PC-9 (cell line): ENCODE measurements at regions of chr16 and their contacts with region 1.

Region 1: DNA sequence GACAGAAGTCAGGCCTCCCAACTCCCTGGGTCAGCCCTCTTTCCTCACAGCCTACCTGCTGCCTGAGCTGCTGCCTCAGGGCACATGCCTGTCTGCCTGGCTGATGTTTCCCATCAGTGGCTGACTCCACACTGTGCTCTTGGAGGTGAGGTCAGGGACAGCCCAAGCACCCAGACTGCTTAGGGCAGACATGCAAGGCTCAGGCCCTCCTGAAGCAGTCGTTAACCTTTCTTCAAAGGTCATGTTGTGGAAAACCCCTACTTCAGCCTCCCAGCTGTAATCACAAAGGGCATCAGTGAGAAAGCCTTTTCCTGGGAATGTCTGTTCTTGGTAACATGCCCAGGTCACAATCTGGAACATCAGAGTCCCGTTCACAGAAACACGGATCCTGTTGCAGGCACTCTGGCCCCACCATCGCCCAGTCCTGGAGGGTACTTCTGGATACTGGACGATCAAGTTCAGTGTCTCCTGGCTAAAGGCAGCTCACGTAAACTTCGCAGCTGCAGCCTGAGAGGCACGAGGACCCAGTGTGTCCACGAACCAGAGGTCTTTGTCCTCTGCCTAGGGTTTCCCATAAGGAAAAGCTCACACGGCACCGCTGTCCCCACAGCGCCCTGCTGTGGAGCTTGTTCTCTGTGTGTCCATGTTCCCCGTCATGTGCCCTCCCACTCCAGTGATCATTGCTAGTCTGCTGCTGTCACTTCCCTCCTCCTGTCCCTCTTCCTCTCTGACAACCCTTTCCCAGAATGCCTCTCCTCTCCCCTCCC is 54.9 kb downstream of the GNAO1 start:
- DNase-seq: peak; percentile 91 to 97
- H3K4me3 ChIP-seq: no peak overlapping the region
- H3K27ac ChIP-seq: peak overlapping the region; percentile 89
- H3K4me1 ChIP-seq: peaks cover 65% of the 10 kb centered on the region
- H3K27me3 ChIP-seq: no peaks in the 10 kb centered on the region
- CTCF ChIP-seq: no peak

Region 2: DNA sequence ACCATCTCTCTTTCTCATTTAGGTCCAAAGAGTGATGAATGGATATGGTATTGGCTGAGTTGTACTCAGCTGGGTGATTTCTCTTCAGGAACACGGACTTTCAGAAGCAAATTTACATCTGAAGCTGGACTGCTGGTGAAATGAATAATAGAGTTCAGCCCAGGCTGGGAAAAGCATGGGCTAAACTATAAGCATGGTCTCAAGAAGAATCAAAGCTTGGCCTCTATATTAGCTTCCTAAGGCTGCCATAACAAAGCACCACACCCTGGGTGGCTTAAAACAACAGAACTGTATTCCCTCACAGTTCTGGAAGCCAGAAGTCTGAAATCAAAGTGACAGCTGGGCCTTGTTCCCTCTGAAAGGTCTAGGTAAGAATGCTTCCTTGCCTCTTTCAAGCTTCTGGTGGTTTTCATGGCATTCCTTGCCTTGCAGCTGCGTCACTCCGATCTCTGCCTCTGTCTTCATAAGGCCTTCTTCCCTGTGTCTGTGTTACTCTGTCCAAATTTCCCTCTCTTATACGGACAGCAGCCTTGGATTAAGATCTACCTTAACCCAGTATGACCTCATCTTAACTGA is 281.2 kb before region 1 on chr16:
- CTCF ChIA-PET with region 1: no interaction called
- POLR2A ChIA-PET with region 1: no interaction called
- intact Hi-C with region 1: loop called (anchors 5 kb)
- DNase-seq: peak in 1 of 2 experiments; percentile 10
- H3K4me3 ChIP-seq: no peak overlapping the region
- H3K27ac ChIP-seq: no peak overlapping the region
- H3K4me1 ChIP-seq: peaks cover 34% of the 10 kb centered on the region
- H3K27me3 ChIP-seq: no peaks in the 10 kb centered on the region
- CTCF ChIP-seq: no peak

Region 3: GRCh38 chr16:56137269-56137668 is 109.0 kb before region 1 on chr16:
- CTCF ChIA-PET with region 1: no interaction called
- POLR2A ChIA-PET with region 1: no interaction called
- intact Hi-C with region 1: no loop called
- DNase-seq: no peak
- H3K4me3 ChIP-seq: no peak overlapping the region
- H3K27ac ChIP-seq: no peak overlapping the region
- H3K4me1 ChIP-seq: no peaks in the 10 kb centered on the region
- H3K27me3 ChIP-seq: no peaks in the 10 kb centered on the region
- CTCF ChIP-seq: no peak

Region 4: DNA sequence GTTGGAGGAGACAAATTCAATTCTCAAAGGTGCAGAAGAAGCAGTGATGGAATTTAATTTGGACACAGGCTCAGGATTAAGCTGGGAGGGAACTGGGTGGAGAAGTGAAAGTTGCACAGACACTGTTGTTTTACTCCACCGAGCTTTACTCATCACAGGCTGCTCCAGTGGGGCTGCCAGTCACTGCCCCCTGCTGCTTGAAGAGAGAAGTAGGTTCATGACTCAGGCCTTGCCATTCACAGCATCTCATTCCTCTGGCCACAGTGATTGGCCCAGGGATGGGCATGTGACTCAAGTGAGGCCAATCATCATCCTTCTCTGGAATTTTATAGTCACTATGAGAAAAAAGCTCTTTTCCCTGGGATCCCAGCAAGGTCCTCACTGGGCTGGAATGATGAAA is 43.2 kb before region 1 on chr16:
- CTCF ChIA-PET with region 1: no interaction called
- POLR2A ChIA-PET with region 1: interaction called, 3 read pairs
- intact Hi-C with region 1: loop called (anchors 5 kb)
- DNase-seq: no peak
- H3K4me3 ChIP-seq: no peak overlapping the region
- H3K27ac ChIP-seq: no peak overlapping the region
- H3K4me1 ChIP-seq: peaks cover 15% of the 10 kb centered on the region
- H3K27me3 ChIP-seq: no peaks in the 10 kb centered on the region
- CTCF ChIP-seq: 0 out of 2 replicates have a peak, but pooled peaks have one; percentile 22

Region 5: DNA sequence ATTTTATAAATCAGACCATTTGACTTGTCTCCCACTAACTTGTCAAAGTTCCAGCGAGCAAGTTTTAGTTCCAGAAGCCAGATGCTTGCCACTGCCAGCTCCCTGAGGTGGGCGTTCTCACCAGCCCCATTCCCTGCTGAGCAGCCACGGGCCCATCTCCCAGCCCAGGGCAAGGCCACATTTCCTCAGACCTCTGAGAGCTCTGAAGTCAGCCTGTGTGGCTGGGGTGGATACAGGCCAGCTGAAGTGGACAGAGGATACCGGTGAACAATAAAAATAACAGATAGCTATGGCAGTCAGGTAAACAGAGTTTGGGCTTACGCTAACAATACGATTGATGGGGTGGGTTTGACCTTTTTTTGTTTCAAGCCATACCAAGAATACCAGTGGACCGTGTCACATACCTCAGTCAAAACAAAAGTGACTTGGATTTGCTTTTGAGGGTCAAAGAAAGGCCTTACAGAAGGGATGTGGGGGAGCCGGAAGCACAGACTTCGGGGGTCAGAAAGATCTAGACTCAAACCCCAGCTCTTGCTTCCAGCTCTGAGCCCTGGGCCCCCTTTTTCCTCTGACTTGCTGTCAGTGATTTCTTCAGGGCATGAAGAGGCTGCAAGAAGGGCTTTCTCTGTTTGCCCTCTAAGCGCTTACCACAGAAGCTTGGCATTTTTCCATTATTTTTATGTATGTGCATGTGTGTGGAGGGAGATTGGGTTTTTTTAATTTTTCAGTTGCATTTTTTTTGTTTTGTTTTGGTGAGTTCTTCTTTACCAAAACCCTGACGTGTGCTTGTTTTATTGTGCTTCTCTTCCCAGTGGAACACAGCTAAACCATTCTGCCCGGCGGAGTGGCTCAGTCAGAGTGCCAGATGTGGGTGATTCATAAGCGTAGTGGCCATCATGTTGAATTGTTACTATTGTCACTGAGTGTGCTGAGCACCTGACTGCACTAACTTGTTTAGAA is 54.9 kb after region 1 on chr16:
- CTCF ChIA-PET with region 1: no interaction called
- POLR2A ChIA-PET with region 1: interaction called, 7 read pairs
- intact Hi-C with region 1: loop called (anchors 1 kb)
- DNase-seq: peak in 1 of 2 experiments; percentile 56
- H3K4me3 ChIP-seq: no peak overlapping the region
- H3K27ac ChIP-seq: no peak overlapping the region
- H3K4me1 ChIP-seq: peaks cover 10% of the 10 kb centered on the region; the same call in 1 of the 2 replicates
- H3K27me3 ChIP-seq: no peaks in the 10 kb centered on the region
- CTCF ChIP-seq: no peak

Region 6: GRCh38 chr16:56317998-56318826 is 72.0 kb after region 1 on chr16:
- CTCF ChIA-PET with region 1: no interaction called
- POLR2A ChIA-PET with region 1: no interaction called
- intact Hi-C with region 1: loop called (anchors 1 kb)
- DNase-seq: peak; percentile 42 to 72
- H3K4me3 ChIP-seq: no peak overlapping the region
- H3K27ac ChIP-seq: no peak overlapping the region
- H3K4me1 ChIP-seq: peaks cover 11% of the 10 kb centered on the region
- H3K27me3 ChIP-seq: no peaks in the 10 kb centered on the region
- CTCF ChIP-seq: peak; percentile 94

Region 7: DNA sequence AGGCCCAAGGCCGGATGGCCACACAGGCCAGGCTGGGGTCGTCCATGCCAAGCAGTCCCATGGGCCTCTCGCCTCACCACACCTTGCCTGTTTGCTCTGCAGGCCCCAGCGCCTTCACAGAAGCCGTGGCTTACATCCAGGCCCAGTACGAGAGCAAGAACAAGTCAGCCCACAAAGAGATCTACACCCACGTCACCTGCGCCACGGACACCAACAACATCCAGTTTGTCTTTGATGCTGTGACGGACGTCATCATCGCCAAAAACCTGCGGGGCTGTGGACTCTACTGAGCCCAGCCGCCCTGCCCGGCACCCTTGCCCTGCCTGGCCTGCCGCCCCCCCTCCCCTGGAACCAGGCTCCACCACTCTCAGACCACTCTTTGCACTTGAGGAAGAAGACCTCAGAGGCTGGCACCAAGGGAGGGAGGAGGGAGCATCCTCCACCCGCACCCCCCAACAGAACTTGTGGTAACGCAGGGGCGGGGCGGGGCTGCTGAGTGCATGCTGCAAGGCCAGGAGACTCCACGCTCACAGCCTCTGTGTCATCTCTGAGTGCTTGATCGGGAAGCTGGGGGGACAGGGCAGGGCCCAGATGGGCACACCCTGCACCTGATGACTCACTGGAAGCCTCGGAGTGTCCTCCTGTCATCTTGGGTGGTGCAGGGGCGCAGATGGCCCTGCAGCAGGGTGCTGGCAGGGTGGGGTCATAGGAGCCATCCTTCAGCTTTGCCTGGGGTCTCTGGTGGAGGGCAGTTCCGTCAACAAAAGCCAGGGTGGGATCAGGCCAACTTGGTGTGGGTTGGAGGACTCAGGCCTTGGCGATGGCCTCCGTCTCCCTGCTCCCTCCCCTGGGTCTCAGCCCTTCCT is 97.7 kb after region 1 on chr16:
- CTCF ChIA-PET with region 1: no interaction called
- POLR2A ChIA-PET with region 1: interaction called, 12 read pairs
- intact Hi-C with region 1: no loop called
- DNase-seq: peak; percentile 38 to 69
- H3K4me3 ChIP-seq: no peak overlapping the region
- H3K27ac ChIP-seq: no peak overlapping the region
- H3K4me1 ChIP-seq: peaks cover 27% of the 10 kb centered on the region
- H3K27me3 ChIP-seq: no peaks in the 10 kb centered on the region
- CTCF ChIP-seq: no peak